ENCODE measurements at regions of chr3 and their contacts with region 1.

Region 1: GRCh38 chr3:121995161-121996137 is 26.6 kb downstream of the ILDR1 start:
- DNase-seq: peak; percentile 87
- H3K4me3 ChIP-seq: peak overlapping the region; percentile 25
- H3K27ac ChIP-seq: peak overlapping the region; percentile 98
- H3K4me1 ChIP-seq: peaks cover 98% of the 10 kb centered on the region
- CTCF ChIP-seq: peak; percentile 91

Region 2: DNA sequence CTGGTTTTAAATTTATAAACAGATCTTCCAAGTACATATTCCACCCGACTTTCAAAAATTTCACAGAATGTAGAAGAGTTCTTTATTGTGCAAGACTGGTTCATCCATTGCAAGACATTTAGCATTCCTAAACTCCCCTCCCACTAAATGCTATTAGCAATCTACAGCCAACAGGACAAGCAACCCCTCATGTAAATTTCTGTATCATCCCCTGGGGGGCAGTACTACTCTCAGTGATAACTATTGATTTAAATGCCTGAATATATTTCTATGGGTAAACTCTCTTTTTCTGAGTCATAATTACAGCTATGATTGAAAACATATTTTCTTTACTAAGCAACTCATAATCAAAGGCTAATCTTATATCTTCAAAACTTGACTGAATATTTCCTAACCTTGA is 111.9 kb before region 1 on chr3:
- CTCF ChIA-PET with region 1: no interaction called
- POLR2A ChIA-PET with region 1: no interaction called
- intact Hi-C with region 1: no loop called
- DNase-seq: peak; percentile 42
- H3K4me3 ChIP-seq: no peak overlapping the region
- H3K27ac ChIP-seq: no peak overlapping the region
- H3K4me1 ChIP-seq: no peaks in the 10 kb centered on the region
- CTCF ChIP-seq: peak; percentile 87

Region 3: GRCh38 chr3:122021811-122022401 is 26.5 kb after region 1 on chr3 and contains the start of gene ILDR1:
- CTCF ChIA-PET with region 1: interaction called, 6 read pairs
- POLR2A ChIA-PET with region 1: interaction called, 18 read pairs
- intact Hi-C with region 1: no loop called
- DNase-seq: peak; percentile 78
- H3K4me3 ChIP-seq: peak within 1 kb of the TSS; percentile 71
- H3K27ac ChIP-seq: peak within 1 kb of the TSS; percentile 77
- H3K4me1 ChIP-seq: peaks cover 73% of the 10 kb centered on the region
- CTCF ChIP-seq: no peak
- total RNA-seq, gene ILDR1: 1.1 and 2.4 TPM in 2 replicates

Region 4: GRCh38 chr3:122055215-122055614 is 59.8 kb after region 1 on chr3 and contains the start of gene CD86:
- CTCF ChIA-PET with region 1: no interaction called
- POLR2A ChIA-PET with region 1: interaction called, 11 read pairs
- intact Hi-C with region 1: loop called (anchors 5 kb)
- DNase-seq: peak; percentile 86
- H3K4me3 ChIP-seq: peak within 1 kb of the TSS; percentile 72
- H3K27ac ChIP-seq: peak within 1 kb of the TSS; percentile 61
- H3K4me1 ChIP-seq: peaks cover 49% of the 10 kb centered on the region
- CTCF ChIP-seq: no peak
- total RNA-seq, gene CD86: 10.8 and 13.5 TPM in 2 replicates

Region 5: GRCh38 chr3:122074621-122075265 is 79.3 kb after region 1 on chr3:
- CTCF ChIA-PET with region 1: interaction called, 8 read pairs
- POLR2A ChIA-PET with region 1: interaction called, 5 read pairs
- intact Hi-C with region 1: loop called (anchors 1 kb)
- DNase-seq: peak; percentile 64
- H3K4me3 ChIP-seq: peak overlapping the region; percentile 71
- H3K27ac ChIP-seq: peak overlapping the region; percentile 81
- H3K4me1 ChIP-seq: peaks cover 69% of the 10 kb centered on the region
- CTCF ChIP-seq: no peak

Region 6: DNA sequence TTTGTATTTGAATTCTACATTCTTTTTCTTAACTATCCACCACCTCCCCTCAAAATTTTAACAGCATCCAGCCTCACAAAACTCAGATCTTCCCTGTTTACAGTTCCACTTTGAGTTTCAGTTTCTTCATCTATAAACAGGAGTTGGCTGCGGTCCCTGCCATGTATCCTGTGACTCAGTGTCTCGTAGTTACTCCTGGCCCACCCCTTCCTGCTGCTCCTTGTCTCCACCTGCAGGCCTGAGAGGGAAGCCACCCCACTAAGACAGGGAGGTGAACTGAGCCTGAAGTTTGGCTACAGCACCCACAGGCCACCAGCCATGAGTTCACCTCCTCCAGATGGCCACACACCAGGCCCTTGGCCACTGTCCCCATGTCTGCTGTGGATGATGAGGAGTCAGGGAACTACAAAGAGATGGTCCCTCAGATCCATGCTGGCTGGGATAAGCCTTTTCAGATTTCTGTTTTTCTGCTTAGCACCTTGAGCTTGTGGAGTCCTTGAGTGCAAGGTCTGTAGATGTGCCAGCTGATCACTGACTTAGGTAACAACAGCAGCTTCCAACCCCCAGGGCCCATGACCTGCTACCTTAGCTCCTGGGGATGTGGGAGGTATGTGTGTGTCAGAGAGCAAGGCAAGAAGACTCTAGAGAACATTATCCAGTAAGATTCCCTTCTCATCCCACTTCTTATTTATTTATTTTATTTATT is 97.2 kb after region 1 on chr3:
- CTCF ChIA-PET with region 1: interaction called, 3 read pairs
- POLR2A ChIA-PET with region 1: interaction called, 5 read pairs
- intact Hi-C with region 1: loop called (anchors 1 kb)
- DNase-seq: peak; percentile 56
- H3K4me3 ChIP-seq: peak overlapping the region; percentile 49
- H3K27ac ChIP-seq: peak overlapping the region; percentile 82
- H3K4me1 ChIP-seq: peaks cover 68% of the 10 kb centered on the region
- CTCF ChIP-seq: peak; percentile 87

Region 7: GRCh38 chr3:122258757-122259371 is 263.4 kb after region 1 on chr3:
- CTCF ChIA-PET with region 1: no interaction called
- POLR2A ChIA-PET with region 1: no interaction called
- intact Hi-C with region 1: loop called (anchors 1 kb)
- DNase-seq: peak; percentile 82
- H3K4me3 ChIP-seq: no peak overlapping the region
- H3K27ac ChIP-seq: no peak overlapping the region
- H3K4me1 ChIP-seq: peaks cover 5% of the 10 kb centered on the region
- CTCF ChIP-seq: peak; percentile 95

Region 8: GRCh38 chr3:122283796-122284445 is 288.5 kb after region 1 on chr3:
- CTCF ChIA-PET with region 1: no interaction called
- POLR2A ChIA-PET with region 1: no interaction called
- intact Hi-C with region 1: no loop called
- DNase-seq: no peak
- H3K4me3 ChIP-seq: no peak overlapping the region
- H3K27ac ChIP-seq: no peak overlapping the region
- H3K4me1 ChIP-seq: no peaks in the 10 kb centered on the region
- CTCF ChIP-seq: no peak

Region 9: GRCh38 chr3:122383771-122384697 is 388.6 kb after region 1 on chr3 and contains the start of gene FAM162A:
- CTCF ChIA-PET with region 1: no interaction called
- POLR2A ChIA-PET with region 1: no interaction called
- intact Hi-C with region 1: loop called (anchors 10 kb)
- DNase-seq: peak; percentile 96
- H3K4me3 ChIP-seq: peak within 1 kb of the TSS; percentile 83
- H3K27ac ChIP-seq: peak within 1 kb of the TSS; percentile 74
- H3K4me1 ChIP-seq: peaks cover 47% of the 10 kb centered on the region
- CTCF ChIP-seq: peak; percentile 80
- total RNA-seq, gene FAM162A: 27.9 and 43.2 TPM in 2 replicates

Measured in OCI-LY7 (cell line).